Activated CD4-positive, alpha-beta memory T cell treated with anti-CD3 and anti-CD28 coated beads for 36 hours (primary cell): ENCODE measurements at regions of chr3 and their contacts with region 1.

Region 1: GRCh38 chr3:153673853-153674252 is 447.3 kb upstream of the ARHGEF26 start:
- DNase-seq: no peak
- H3K4me3 Mint-ChIP-seq: no peak overlapping the region
- H3K27ac Mint-ChIP-seq: no peak overlapping the region
- H3K4me1 Mint-ChIP-seq: peaks cover 9% of the 10 kb centered on the region
- H3K27me3 Mint-ChIP-seq: no peaks in the 10 kb centered on the region

Region 2: GRCh38 chr3:153633407-153633806 is 40.4 kb before region 1 on chr3:
- CTCF ChIA-PET with region 1: no interaction called
- POLR2A ChIA-PET with region 1: no interaction called
- intact Hi-C with region 1: loop called (anchors 1 kb)
- DNase-seq: no peak
- H3K4me3 Mint-ChIP-seq: no peak overlapping the region
- H3K27ac Mint-ChIP-seq: no peak overlapping the region
- H3K4me1 Mint-ChIP-seq: peaks cover 44% of the 10 kb centered on the region
- H3K27me3 Mint-ChIP-seq: no peaks in the 10 kb centered on the region